ENCODE measurements at regions of chr13 and their contacts with region 1.

Region 1: DNA sequence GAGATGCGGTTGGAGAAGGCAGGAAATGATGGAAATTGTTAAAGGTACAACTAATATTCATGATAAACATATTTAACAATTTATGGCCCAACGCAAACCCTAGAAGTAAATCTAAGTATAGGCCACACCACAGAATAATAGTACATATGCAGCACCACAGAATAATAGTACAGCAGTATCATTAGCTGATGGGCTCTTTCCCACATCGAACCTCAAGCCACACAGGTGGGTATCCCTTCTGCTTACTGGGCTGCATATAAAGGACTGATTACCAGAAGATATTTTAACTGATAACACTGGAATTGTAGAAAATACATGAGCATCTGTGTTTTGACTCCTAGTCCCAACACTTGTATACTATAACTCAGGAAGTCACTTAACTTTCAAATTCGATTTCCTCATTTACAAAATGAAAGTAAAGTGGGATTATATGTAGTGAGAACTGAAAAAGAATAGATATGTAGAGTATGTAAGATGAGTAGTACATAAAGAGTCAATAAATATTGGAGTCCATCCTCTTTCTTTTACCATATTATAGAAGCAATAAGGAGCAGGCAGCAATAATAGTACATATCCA is 91.5 kb downstream of the TSC22D1 start:
- DNase-seq: no peak
- ATAC-seq: no peak

Region 2: GRCh38 chr13:44449999-44450708 is 34.5 kb before region 1 on chr13:
- intact Hi-C with region 1: no loop called
- DNase-seq: no peak
- ATAC-seq: no peak

Region 3: DNA sequence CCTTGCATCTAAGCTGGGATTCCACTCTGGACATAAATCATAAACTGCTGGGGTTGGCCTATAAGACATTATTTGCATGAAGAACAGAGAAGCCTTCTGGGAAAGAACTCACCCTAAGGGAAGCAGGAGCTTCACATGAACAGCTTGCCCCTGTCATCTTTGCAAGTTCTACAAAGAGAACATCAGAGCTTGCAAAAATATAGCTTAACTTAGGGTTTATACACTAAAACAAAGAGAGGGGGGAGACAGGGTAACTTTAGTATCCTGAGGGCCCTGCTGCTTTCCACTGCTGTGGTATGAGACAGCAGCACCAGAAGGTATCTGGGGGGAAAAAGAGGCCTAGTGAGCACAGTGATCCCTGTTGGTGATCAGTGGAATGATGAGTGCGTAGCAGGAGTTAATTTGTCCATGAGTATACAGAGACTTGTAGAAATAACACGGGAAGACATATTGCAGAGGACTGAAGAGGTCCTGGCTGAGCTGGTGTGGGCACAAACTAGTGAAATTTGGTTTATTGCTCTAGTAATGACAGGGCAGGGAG is 207.6 kb after region 1 on chr13:
- intact Hi-C with region 1: loop called (anchors 10 kb)
- DNase-seq: no peak
- ATAC-seq: no peak

Region 4: GRCh38 chr13:44879463-44880058 is 394.9 kb after region 1 on chr13:
- intact Hi-C with region 1: loop called (anchors 2 kb)
- DNase-seq: no peak
- ATAC-seq: no peak

Region 5: GRCh38 chr13:44917589-44918325 is 433.1 kb after region 1 on chr13:
- intact Hi-C with region 1: loop called (anchors 2 kb)
- DNase-seq: peak; percentile 95
- ATAC-seq: peak; percentile 91

Region 6: GRCh38 chr13:44969551-44970484 is 485.2 kb after region 1 on chr13:
- intact Hi-C with region 1: loop called (anchors 1 kb)
- DNase-seq: no peak
- ATAC-seq: peak; percentile 60